Gastrocnemius medialis (tissue), 4 donors: ENCODE measurements at regions of chr1 and their contacts with region 1.

Region 1: GRCh38 chr1:204980840-204981405 is 62.1 kb upstream of the CNTN2 start:
- DNase-seq: no peak
- ATAC-seq: no peak
- H3K4me3 ChIP-seq: no peak overlapping the region
- H3K27ac ChIP-seq: peak overlapping the region in 1 of 4 donors; percentile 38
- H3K4me1 ChIP-seq: no peaks in the 10 kb centered on the region
- H3K27me3 ChIP-seq: no peaks in the 10 kb centered on the region
- CTCF ChIP-seq: no peak
- POLR2A ChIP-seq: no peak

Region 2: DNA sequence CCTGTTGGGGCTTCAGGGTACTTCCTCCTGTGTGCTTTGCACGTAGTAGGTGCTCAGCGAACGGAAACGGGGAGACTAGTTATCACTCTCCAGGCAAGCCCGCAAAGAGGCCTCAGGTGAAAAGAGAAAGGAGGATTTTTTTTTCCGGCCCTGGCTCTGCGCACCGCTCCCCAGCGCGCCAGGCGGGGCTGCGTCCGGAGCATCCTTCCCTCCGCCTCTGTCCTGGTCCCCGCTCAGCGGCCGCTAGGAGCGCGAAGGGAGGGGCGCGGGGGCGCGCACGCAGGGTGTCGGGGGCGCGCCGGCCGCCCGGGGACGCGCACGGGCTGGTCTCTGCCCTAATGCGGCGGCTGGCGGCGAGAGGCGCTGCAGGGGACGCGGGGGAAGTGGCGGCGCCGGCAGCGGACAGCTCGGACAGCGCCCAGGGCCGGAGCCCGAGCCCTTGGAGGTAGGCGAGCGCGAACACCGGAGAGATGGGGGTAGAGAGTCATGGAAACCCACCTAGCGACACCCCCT is 152.5 kb before region 1 on chr1:
- in situ Hi-C with region 1: no loop called
- intact Hi-C with region 1: no loop called
- DNase-seq: no peak
- ATAC-seq: peak in 1 of 2 donors; percentile 52
- H3K4me3 ChIP-seq: peak overlapping the region; percentile 31 to 53 (median 41)
- H3K27ac ChIP-seq: peak overlapping the region in 2 of 4 donors; percentile 34 to 45
- H3K4me1 ChIP-seq: no peaks in the 10 kb centered on the region
- H3K27me3 ChIP-seq: peaks cover 14 to 20% (median 16%) of the 10 kb centered on the region in 3 donors
- CTCF ChIP-seq: peak in 1 of 5 experiments; percentile 21
- POLR2A ChIP-seq: peak in 1 of 2 donors; percentile 35

Region 3: GRCh38 chr1:205056188-205056611 is 75.3 kb after region 1 on chr1:
- in situ Hi-C with region 1: loop called in 3 of 4 experiments (anchors 5 to 10 kb)
- intact Hi-C with region 1: loop called (anchors 5 kb)
- DNase-seq: no peak
- ATAC-seq: no peak
- H3K4me3 ChIP-seq: no peak overlapping the region
- H3K27ac ChIP-seq: no peak overlapping the region
- H3K4me1 ChIP-seq: no peaks in the 10 kb centered on the region
- H3K27me3 ChIP-seq: no peaks in the 10 kb centered on the region
- CTCF ChIP-seq: no peak
- POLR2A ChIP-seq: no peak